HepG2 (cell line): ENCODE measurements at regions of chr10 and their contacts with region 1.

Region 1: DNA sequence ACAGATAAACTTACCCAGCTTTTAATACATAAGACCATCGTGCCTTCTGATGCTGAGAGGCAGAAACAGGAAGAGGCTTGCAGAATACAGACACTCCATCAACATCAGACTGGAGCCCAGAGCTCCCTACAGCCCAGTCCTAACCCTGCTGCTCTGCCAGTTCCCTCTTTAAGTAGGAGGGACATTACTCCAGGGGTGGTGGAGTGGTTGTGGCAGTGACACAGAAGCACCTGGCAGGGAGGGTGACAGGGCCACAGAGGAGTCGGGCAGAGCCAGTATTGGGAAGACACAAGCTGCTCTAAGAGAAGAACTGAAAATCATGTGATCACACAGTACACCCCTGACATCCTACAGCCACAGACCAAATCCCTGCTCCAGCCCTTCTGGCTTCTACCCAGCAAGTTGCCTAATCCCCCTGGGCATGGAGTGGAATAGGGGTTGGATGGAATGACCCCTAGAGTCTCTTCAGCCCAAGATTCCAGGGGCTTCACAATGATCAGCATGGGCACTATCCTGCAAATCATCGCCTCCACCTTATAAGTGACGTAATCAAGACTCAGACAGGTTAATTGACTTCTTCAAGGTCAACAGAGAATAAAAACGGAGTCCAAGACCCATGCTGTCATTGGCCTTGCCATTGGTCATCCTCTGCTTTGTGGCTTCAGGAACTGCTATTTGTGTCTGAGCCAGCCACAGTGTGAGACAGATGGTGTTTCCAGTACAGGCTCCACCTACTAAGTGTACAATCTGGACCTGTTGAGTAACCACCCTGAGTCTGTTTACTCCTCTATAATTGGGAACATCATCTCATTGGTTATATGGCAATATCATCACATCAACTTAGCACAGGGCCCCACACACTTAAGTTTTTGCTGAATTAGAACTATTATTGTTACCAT is 61.1 kb upstream of the ZMIZ1 start:
- DNase-seq: no peak
- ATAC-seq: no peak
- H3K4me3 ChIP-seq: no peak overlapping the region
- H3K27ac ChIP-seq: no peak overlapping the region
- H3K4me1 ChIP-seq: peaks cover 33% of the 10 kb centered on the region
- H3K27me3 ChIP-seq: peaks cover 2 to 40% of the 10 kb centered on the region in 2 experiments
- CTCF ChIP-seq: no peak
- EP300 ChIP-seq: no peak
- POLR2A ChIP-seq: no peak
- RAD21 ChIP-seq: no peak

Region 2: DNA sequence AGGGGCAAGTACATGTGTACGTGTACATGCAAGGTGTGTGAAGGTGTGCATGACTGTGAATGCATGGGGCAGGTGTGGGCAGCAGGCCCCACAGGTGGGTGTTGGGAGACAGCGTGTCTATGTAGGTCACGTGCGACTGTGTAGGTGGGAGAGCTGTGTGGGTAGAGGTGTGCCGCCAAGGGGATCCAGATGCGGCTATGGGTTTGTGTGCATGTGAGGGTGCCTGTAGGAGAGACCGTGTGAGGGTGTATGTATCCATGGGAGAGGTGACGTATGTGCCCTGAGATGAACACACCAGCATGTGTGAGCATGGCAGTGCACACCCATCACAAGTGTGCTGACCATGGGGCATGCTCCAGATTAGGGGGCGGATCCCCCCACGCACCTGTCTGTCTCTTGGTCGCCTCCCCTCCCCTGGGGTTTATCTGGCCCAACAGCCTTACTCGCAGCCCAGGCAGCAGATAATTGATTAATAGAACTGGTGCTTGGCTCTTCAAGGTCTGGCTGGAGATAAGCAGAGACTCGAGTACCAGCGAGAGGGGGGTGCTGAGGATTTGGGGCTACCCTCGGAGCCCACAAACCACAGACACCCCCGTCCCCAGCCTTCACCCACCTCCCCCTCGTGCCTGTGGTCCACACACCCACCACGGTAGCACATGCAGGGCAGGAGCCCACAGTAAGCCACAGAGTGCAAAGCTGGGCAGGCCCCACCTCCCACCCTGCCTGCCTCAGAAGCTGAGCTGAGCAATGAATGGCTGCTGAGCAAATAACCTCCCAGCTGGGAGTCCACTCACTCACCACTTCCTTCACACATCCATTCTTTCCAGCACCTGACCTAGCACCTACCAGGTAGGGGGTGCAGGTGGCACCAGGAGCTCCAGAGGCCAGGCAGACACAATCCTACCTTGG is 19.7 kb after region 1 on chr10:
- CTCF ChIA-PET with region 1: no interaction called
- POLR2A ChIA-PET with region 1: no interaction called
- in situ Hi-C with region 1: no loop called
- intact Hi-C with region 1: loop called (anchors 1 kb)
- DNase-seq: no peak
- ATAC-seq: peak; percentile 48
- H3K4me3 ChIP-seq: no peak overlapping the region; a peak in 1 of 6 replicates
- H3K27ac ChIP-seq: no peak overlapping the region
- H3K4me1 ChIP-seq: peaks cover 47% of the 10 kb centered on the region
- H3K27me3 ChIP-seq: peaks cover 0 to 24% of the 10 kb centered on the region in 2 experiments; a peak in 4 of 5 replicates
- CTCF ChIP-seq: no peak
- EP300 ChIP-seq: no peak
- POLR2A ChIP-seq: no peak
- RAD21 ChIP-seq: no peak